Dorsolateral prefrontal cortex (tissue), 120 donors: ENCODE measurements at regions of chr22 and their contacts with region 1.

Region 1: GRCh38 chr22:26679003-26679629 is 21.7 kb downstream of the MIAT start:
- DNase-seq: peak; percentile 57 to 85 (median 76)
- H3K4me3 ChIP-seq: no peak overlapping the region
- H3K27ac ChIP-seq: no peak overlapping the region
- H3K27me3 ChIP-seq: no peaks in the 10 kb centered on the region
- CTCF ChIP-seq: peak; percentile 64 to 95 (median 87)

Region 2: DNA sequence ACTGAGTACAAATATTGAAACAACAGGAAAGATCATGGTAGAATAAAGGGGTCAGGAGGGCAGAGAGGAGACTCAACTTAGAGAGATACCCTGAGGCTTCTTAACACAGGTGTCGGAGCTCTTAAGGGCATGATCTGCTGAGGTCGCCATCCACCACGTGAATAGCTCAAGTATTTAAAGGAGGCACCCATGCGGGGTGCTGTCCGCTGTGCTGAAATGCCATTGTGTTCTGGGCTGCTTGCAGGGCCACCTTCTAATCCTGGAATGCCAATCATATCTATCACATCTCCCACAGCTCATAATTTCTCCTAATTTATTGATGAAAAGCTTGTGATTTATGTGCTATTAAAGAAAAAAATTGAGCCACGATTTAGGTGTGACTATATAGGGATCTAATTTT is 419.6 kb before region 1 on chr22:
- intact Hi-C with region 1: no loop called
- DNase-seq: no peak
- H3K4me3 ChIP-seq: no peak overlapping the region
- H3K27ac ChIP-seq: no peak overlapping the region
- H3K27me3 ChIP-seq: peaks cover 0 to 5% (median 0%) of the 10 kb centered on the region in 45 donors
- CTCF ChIP-seq: no peak

Region 3: DNA sequence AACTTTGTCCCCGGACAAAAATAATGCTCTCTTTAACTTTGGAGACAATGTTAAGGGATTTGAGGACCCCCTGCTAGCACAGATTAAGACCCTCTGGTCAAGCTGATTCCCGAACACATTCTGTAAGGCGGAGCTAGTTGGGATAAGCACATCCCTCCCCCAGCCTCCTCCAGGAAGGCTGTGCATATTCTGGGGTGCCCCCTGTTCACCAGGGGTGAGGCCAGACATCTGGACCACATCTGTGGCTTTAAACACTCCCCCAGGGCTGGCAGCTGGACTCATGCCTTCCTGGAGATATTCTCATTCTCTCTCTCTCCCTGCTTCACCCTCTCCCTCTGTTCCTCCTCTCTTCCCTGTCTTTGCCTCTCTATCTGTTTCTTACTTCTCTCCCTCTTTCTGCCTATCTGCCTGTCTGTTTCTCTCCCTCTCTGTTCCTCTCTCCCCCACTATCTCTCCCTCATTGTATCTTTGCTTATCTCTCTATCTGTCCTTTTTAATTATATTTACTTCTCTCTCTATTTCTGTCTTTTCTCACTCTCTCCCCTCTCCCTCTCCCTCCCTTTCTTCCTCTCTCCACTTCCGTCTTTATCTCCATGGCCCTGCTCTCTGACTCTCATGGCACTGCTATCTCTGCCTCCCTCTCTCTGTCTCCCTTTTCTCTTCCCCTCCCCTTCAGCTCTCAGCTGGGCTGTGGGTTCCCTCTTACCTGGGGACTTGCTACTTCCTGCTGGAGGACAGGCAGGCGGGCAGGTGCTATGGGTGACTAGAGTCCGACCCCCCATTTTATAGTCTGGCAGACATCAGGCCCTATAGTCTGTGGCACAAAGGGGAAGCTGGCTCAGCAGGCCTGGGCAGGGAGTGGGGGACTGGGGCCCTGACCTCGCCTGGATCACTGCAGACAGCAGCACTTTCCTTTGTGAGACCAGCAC is 61.6 kb before region 1 on chr22 and contains the start of gene CRYBB1:
- intact Hi-C with region 1: no loop called
- DNase-seq: no peak
- H3K4me3 ChIP-seq: no peak within 1 kb of the TSS
- H3K27ac ChIP-seq: peak within 1 kb of the TSS in 16 of 59 donors; percentile 2 to 58 (median 34)
- H3K27me3 ChIP-seq: peaks cover 0 to 7% (median 0%) of the 10 kb centered on the region in 45 donors
- CTCF ChIP-seq: no peak
- total RNA-seq, gene CRYBB1: 0.47 to 4.9 (median 1.6) TPM in 105 of 120 experiments, not detected in the others

Region 4: DNA sequence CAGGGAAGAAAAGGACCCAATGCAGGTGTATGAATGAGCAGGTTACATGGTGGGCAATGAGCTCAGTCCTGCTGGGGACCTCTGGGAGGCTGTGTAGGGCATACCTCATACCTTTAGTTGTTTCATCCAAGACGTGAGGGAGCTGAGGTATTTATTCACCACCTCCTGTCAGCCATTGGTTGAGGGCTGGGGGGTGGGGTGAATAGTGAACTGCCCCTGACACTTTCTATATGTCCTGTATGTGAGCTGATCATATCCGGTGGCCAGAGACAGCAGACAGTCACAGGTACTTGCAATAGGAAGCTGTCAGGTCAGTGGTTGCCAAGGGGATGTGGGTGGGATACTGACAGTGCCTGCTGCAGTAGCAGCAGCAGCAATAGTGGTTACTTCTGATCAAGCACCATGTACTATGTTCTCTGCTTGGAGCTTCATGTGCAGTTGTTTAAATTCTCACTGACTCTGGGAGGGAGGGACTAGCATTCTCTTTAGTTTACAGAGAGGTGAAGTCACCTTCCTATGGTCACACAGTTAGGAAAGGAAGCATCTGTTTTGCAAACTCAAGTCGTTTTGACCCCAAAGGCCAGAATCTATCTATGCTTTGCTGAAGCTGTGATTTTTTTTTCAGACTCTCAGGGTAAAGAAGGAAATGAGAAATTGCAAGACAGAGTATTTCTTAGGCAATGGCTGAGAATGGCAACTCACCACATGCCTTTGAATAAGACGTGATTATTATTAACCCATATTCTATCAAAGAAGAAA is 32.3 kb after region 1 on chr22:
- intact Hi-C with region 1: no loop called
- DNase-seq: no peak
- H3K4me3 ChIP-seq: no peak overlapping the region
- H3K27ac ChIP-seq: no peak overlapping the region
- H3K27me3 ChIP-seq: no peaks in the 10 kb centered on the region
- CTCF ChIP-seq: no peak

Region 5: GRCh38 chr22:26756675-26757293 is 77.7 kb after region 1 on chr22:
- intact Hi-C with region 1: loop called in 1 of 2 experiments (anchors 5 kb)
- DNase-seq: peak in 9 of 10 donors; percentile 49 to 78 (median 67)
- H3K4me3 ChIP-seq: peak overlapping the region; percentile 4 to 64 (median 40)
- H3K27ac ChIP-seq: peak overlapping the region in 29 of 59 donors; percentile 8 to 79 (median 55)
- H3K27me3 ChIP-seq: no peaks in the 10 kb centered on the region
- CTCF ChIP-seq: peak in 55 of 56 donors; percentile 70 to 100 (median 94)

Region 6: DNA sequence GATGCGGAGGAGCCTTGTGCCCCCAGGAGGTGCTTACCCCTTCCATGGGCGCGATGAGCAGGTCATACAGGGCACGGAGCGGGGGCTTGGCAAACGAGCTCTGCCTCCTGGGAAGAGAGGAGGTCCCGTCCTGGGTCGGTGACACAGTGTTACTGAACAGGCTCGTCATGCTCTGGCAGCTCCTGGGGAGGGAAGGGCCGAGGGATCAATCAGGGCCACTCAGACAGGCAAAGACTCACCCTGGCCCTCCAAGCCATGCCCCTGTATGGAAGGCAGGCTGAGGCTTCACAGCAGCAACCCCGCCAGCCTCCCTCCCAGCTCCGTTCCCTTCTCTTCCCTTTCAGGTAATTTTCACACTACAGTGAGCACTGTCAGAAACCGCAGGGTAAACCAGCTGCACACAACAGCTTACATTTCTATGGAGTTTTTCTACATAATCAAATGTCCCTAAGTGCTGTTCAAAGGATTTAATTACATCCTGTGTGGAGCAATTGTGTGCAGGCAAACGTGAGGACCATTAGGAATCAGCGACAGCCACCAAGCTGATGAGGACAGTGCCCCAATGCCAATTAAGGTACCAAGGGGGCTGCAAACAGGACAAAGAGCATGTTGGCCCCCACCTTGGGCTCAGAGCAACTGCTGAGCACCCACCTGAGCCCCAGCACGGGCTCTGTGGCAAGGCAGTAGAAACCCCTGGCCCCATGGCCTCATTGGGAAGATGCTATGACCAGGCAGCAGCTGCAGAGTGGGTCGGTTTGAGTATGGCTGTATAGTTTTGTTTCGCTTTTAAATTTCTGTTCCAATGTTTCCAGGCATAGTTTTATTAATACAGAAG is 1335.3 kb after region 1 on chr22:
- intact Hi-C with region 1: loop called (anchors 5 to 10 kb)
- DNase-seq: peak in 3 of 10 donors; percentile 30 to 37 (median 36)
- H3K4me3 ChIP-seq: no peak overlapping the region
- H3K27ac ChIP-seq: peak overlapping the region in 2 of 59 donors; percentile 27 to 35
- H3K27me3 ChIP-seq: no peaks in the 10 kb centered on the region
- CTCF ChIP-seq: no peak